PC-9 (cell line): ENCODE measurements at regions of chr15 and their contacts with region 1.

Region 1: DNA sequence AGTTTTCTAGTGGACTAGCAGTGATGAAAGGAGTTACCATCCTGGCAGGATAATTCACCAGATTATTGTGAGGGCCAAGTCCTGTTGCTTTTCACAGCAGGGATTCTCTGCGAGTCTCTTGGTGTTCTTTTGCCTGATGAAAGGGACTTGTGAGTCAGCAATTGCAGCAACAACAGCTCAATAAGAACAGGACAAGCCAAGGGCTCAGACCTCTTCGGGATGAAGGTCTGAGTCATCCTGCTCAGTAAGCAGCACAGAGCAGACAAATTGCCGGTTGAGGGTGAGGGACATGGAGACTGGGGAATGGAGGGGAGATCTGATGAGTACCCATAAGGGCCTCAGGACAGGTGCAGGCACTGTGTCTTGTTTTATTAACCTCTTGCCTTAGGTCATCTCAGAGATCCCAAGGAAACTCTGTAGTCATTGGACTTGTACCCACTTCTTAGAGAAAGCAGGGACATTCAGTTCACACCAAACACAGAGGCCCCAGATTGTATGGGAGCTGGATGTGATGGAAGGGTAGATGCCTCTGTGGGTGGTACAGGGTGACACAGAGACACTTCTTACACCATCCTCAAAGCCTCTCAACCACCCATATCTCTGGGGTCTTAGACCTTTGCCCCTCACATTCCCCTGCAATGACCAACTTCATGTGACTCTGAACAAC is 173.8 kb upstream of the TLE3 start:
- DNase-seq: peak; percentile 63 to 93
- H3K4me3 ChIP-seq: no peak overlapping the region
- H3K27ac ChIP-seq: peak overlapping the region; percentile 74
- H3K4me1 ChIP-seq: peaks cover 56% of the 10 kb centered on the region
- H3K27me3 ChIP-seq: no peaks in the 10 kb centered on the region
- CTCF ChIP-seq: no peak

Region 2: DNA sequence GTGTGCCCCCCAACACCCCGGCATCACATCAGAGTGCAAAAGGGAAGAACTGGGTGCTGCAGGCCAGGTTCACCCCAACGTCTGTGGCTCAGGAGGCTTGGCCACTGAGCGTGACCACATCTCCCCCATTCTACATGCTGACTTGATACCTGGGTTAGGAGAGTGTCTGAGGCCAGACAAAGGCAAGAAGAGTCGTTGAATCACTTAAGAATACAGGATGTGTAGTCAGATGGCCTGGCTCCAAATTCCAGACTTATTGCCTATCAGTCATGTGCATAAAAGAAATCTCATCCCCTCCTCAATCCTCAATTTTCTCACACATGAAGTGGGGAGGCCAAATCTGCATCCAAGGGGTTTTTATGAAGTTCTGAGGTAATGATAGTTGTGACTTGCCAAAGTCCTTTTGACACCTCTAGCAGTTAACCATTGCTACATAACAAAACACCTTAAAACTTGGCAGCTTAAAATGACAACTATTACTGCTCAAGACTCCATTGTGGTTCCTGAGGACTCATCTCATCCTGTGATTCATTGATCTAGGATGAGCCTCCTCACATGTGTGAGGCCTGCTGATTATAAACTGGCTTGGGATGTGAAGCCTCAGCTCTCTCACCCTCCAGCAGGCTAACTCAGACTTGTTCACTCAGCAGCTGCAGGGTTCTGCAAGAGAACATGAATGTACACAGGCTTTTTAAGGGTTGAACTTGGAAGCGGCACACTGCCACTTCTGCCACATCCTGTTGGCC is 35.0 kb before region 1 on chr15:
- CTCF ChIA-PET with region 1: no interaction called
- POLR2A ChIA-PET with region 1: no interaction called
- intact Hi-C with region 1: no loop called
- DNase-seq: no peak
- H3K4me3 ChIP-seq: no peak overlapping the region
- H3K27ac ChIP-seq: no peak overlapping the region
- H3K4me1 ChIP-seq: no peaks in the 10 kb centered on the region
- H3K27me3 ChIP-seq: no peaks in the 10 kb centered on the region
- CTCF ChIP-seq: no peak

Region 3: DNA sequence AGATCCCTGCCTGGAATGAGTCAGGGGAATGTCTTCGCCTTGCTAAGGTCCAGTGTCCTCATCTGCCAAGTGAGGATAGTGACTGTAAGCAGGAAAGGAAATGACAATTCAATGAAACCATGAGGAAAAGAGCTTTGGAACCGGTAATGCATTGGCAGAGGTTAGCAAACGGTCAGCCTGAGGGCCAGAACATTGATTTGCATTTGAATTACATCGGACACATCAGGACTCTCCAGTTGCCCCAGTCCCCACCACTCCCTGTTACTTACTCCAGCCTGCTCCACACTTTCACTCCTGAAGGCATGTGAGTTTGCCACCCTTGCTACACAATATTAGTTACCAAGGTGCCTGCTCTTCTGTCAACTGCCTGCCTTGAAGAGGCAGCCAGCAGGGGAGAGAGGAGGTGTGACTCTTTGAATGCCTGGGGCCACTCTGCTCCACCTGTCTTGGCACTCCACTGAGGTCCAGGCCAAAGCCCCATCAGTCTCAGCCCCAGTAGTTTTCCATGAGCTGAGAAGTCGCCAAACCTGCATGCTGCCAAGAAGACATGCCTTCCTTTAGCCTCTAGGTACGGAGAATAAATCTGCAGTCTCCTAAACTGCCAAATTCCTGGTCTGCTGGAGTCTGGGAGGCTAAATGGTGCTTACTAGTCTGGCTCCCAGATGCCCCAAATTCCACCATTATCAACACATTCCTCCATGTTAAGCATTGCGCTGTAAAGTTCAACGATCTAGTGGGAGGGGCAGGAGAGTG is 17.8 kb after region 1 on chr15:
- CTCF ChIA-PET with region 1: no interaction called
- POLR2A ChIA-PET with region 1: interaction called, 8 read pairs
- intact Hi-C with region 1: loop called (anchors 1 kb)
- DNase-seq: peak; percentile 86 to 90
- H3K4me3 ChIP-seq: no peak overlapping the region
- H3K27ac ChIP-seq: peak overlapping the region; percentile 61
- H3K4me1 ChIP-seq: peaks cover 39% of the 10 kb centered on the region
- H3K27me3 ChIP-seq: no peaks in the 10 kb centered on the region
- CTCF ChIP-seq: no peak

Region 4: GRCh38 chr15:70299931-70300869 is 28.6 kb after region 1 on chr15:
- CTCF ChIA-PET with region 1: no interaction called
- POLR2A ChIA-PET with region 1: no interaction called
- intact Hi-C with region 1: no loop called
- DNase-seq: no peak
- H3K4me3 ChIP-seq: no peak overlapping the region
- H3K27ac ChIP-seq: no peak overlapping the region
- H3K4me1 ChIP-seq: peaks cover 11% of the 10 kb centered on the region
- H3K27me3 ChIP-seq: no peaks in the 10 kb centered on the region
- CTCF ChIP-seq: no peak

Region 5: DNA sequence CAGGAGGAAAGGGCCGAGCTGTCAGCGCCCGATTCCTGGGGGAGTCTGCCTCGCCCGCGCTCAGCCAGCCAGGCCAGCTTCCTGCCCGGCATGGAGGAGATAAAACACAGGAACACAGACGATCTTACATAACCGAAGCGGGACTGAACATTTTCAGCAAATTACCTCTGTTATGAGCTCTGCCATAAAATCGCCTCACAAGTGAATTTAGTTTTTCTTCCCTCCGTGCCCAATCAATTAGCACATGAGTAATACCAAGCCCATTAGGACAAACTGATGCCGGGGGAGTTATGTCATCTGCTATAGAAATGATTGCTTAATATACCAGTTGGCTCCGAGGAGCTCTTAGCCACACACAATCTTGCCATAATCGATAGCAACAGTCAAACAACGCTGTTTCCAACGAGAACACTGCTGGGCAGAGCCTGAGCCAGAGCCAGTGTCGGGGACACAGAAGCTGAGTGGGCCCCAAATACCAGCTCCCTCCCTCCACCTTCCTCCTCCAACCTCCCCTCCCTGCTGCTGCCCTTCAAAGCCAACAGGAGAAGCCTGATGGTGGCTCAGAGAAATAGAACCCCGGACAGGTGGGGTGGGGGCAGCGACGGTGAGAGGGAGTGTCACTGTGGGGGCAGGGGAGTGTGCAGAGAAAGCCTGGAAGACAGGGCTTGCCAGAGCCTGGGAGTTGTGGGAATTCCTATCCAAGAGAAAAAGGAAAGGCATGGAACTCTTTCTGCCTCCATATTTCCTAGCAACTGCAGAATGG is 105.6 kb after region 1 on chr15:
- CTCF ChIA-PET with region 1: no interaction called
- POLR2A ChIA-PET with region 1: no interaction called
- intact Hi-C with region 1: loop called (anchors 10 kb)
- DNase-seq: no peak
- H3K4me3 ChIP-seq: no peak overlapping the region
- H3K27ac ChIP-seq: no peak overlapping the region
- H3K4me1 ChIP-seq: peaks cover 30% of the 10 kb centered on the region
- H3K27me3 ChIP-seq: no peaks in the 10 kb centered on the region
- CTCF ChIP-seq: no peak

Region 6: GRCh38 chr15:70466895-70467529 is 195.5 kb after region 1 on chr15:
- CTCF ChIA-PET with region 1: interaction called, 3 read pairs
- POLR2A ChIA-PET with region 1: no interaction called
- intact Hi-C with region 1: loop called (anchors 1 kb)
- DNase-seq: peak; percentile 42 to 49
- H3K4me3 ChIP-seq: no peak overlapping the region
- H3K27ac ChIP-seq: no peak overlapping the region
- H3K4me1 ChIP-seq: peaks cover 63% of the 10 kb centered on the region
- H3K27me3 ChIP-seq: no peaks in the 10 kb centered on the region
- CTCF ChIP-seq: peak; percentile 70

Region 7: GRCh38 chr15:70516408-70517158 is 245.0 kb after region 1 on chr15:
- CTCF ChIA-PET with region 1: no interaction called
- POLR2A ChIA-PET with region 1: no interaction called
- intact Hi-C with region 1: no loop called
- DNase-seq: no peak
- H3K4me3 ChIP-seq: no peak overlapping the region
- H3K27ac ChIP-seq: no peak overlapping the region
- H3K4me1 ChIP-seq: no peaks in the 10 kb centered on the region
- H3K27me3 ChIP-seq: no peaks in the 10 kb centered on the region
- CTCF ChIP-seq: no peak